ENCODE measurements at regions of chr13 and their contacts with region 1.

Region 1: DNA sequence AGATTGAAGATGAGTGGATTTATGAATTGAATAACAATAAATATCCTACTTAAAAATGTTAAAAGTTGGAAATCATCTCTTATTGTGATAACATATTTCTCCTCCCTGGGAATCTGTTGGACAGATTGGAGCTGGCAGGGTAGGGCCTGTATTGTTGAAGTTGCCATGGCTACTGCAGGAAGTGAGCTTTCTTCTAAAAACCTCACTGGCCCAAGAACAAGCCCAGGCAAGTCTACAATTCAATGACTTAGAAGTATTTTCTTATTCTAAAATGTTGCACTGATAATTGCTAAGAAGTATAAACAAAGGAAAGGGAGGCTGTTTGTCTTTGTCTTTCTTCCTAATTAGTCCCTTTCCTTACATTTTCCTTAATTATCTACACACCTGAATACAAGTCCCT is 112.1 kb downstream of the DLEU7 start:
- DNase-seq: no peak
- ATAC-seq: no peak
- H3K4me3 ChIP-seq: no peak overlapping the region
- H3K27ac ChIP-seq: no peak overlapping the region
- H3K4me1 ChIP-seq: no peaks in the 10 kb centered on the region
- H3K27me3 ChIP-seq: no peaks in the 10 kb centered on the region
- CTCF ChIP-seq: no peak
- POLR2A ChIP-seq: no peak

Region 2: GRCh38 chr13:50684366-50684765 is 47.0 kb before region 1 on chr13:
- in situ Hi-C with region 1: no loop called
- intact Hi-C with region 1: loop called (anchors 5 kb)
- DNase-seq: no peak
- ATAC-seq: no peak
- H3K4me3 ChIP-seq: no peak overlapping the region
- H3K27ac ChIP-seq: peak overlapping the region in 2 of 4 donors; percentile 29 to 42
- H3K4me1 ChIP-seq: peaks cover 0 to 22% of the 10 kb centered on the region in 2 donors
- H3K27me3 ChIP-seq: no peaks in the 10 kb centered on the region
- CTCF ChIP-seq: no peak
- POLR2A ChIP-seq: no peak

Measured in gastrocnemius medialis (tissue), 4 donors.